SK-N-SH (cell line): ENCODE measurements at regions of chr1 and their contacts with region 1.

Region 1: DNA sequence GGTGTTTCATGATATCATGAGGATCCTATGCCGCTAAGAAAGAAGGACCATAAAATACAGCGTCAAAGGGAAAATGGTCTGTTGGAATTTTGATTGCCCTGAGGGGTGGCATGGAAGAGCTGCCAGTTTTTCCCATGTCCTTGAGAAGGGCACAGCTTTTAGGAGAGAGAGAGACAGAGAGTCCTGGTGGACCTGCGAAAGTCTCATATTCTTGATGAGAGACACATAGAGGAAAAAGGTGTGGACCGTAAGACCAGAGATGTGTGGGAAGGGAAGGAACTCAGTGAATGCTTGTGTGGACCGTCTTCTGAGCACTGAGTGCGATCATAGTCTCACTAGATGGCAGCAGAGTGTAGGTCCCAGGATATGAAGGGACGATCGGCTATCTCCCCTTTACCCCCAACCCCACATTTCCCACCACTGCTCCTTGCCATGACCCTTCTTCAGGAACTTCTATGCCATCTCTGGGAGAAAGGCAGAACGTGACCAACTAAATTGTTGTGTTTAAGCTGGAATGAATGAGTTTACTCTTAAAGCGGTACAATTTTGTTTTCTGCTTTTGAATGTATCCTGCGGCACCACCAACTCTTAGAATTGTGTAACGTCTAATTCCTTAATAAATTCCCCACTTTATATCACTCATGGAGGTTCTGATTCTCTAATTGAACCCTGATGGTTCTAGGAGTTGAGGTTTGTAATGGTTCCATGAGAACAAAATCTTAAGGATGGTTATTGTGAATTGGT is 117.7 kb downstream of the CTH start:
- DNase-seq: peak; percentile 65
- H3K4me3 ChIP-seq: no peak overlapping the region; a peak in 1 of 4 replicates
- H3K27ac ChIP-seq: no peak overlapping the region
- H3K4me1 ChIP-seq: peaks cover 3 to 4% of the 10 kb centered on the region in 2 experiments; a peak in 3 of 4 replicates
- H3K27me3 ChIP-seq: no peaks in the 10 kb centered on the region
- CTCF ChIP-seq: peak; percentile 70
- EP300 ChIP-seq: no peak
- RAD21 ChIP-seq: peak; percentile 87

Region 2: GRCh38 chr1:70517444-70517843 is 11.3 kb before region 1 on chr1:
- CTCF ChIA-PET with region 1: interaction called, 18 read pairs
- POLR2A ChIA-PET with region 1: no interaction called
- DNase-seq: no peak
- H3K4me3 ChIP-seq: no peak overlapping the region
- H3K27ac ChIP-seq: no peak overlapping the region
- H3K4me1 ChIP-seq: no peaks in the 10 kb centered on the region; a peak in 2 of 4 replicates
- H3K27me3 ChIP-seq: no peaks in the 10 kb centered on the region
- CTCF ChIP-seq: no peak
- EP300 ChIP-seq: no peak
- RAD21 ChIP-seq: no peak

Region 3: DNA sequence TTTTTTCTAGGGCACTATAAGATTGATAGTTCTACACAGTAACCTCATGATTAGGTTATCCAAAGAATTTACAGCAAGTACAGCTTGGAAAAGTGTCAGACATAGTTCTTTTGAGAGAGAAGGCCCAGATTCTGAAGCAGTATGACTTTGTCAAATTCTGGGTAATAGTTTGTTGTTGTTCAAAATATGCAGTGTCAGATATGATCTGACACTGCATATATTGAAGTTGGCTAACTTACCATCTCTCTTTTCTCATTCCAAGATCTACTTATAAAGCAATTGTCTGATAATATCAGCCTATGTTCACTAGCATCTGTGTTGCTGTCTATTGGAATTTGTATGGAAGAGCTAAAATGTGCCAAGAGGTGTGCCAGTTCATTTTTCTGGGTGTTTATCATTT is 42.4 kb after region 1 on chr1:
- CTCF ChIA-PET with region 1: interaction called, 13 read pairs
- POLR2A ChIA-PET with region 1: no interaction called
- DNase-seq: no peak
- H3K4me3 ChIP-seq: no peak overlapping the region
- H3K27ac ChIP-seq: no peak overlapping the region
- H3K4me1 ChIP-seq: no peaks in the 10 kb centered on the region
- H3K27me3 ChIP-seq: no peaks in the 10 kb centered on the region
- CTCF ChIP-seq: no peak
- EP300 ChIP-seq: no peak
- RAD21 ChIP-seq: no peak

Region 4: DNA sequence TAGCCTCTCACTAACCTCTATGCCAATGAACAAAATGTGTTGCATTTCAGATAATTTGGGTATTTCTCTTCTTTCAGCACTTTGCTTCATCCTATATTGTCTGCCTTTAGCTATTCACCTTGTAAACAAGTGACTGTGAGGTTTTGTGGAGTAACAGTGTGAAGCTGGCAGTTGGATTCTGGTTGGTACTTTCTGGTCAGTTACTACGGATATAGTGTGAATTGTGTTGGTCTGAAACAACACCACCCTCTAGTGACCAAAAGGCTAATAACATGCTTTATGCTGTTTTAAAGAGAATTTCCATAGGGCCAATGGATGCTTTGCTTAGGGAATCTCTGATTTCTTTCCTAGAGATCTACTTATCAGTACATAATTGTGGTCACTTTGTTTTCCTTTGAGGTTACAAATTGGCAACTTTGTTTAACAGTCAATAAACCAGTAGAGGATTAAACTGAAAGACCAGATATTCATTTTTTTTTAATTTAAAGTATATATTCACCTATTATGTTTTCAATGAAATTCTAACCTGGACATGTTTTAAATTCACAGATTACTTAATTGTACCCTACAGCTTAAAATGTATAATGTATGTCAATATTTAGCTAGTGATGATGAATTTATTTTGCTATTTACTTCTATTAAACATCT is 521.3 kb after region 1 on chr1:
- CTCF ChIA-PET with region 1: interaction called, 87 read pairs
- POLR2A ChIA-PET with region 1: no interaction called
- DNase-seq: peak; percentile 77
- H3K4me3 ChIP-seq: no peak overlapping the region
- H3K27ac ChIP-seq: no peak overlapping the region
- H3K4me1 ChIP-seq: peaks cover 3 to 11% of the 10 kb centered on the region in 2 experiments; a peak in 1 of 4 replicates
- H3K27me3 ChIP-seq: no peaks in the 10 kb centered on the region
- CTCF ChIP-seq: peak; percentile 81
- EP300 ChIP-seq: no peak
- RAD21 ChIP-seq: peak; percentile 98